OCI-LY7 (cell line): ENCODE measurements at regions of chr4 and their contacts with region 1.

Region 1: GRCh38 chr4:185811509-185812364 is at the start of gene SORBS2:
- DNase-seq: peak; percentile 92
- H3K4me3 ChIP-seq: peak within 1 kb of the TSS; percentile 78
- H3K27ac ChIP-seq: peak within 1 kb of the TSS; percentile 90
- H3K4me1 ChIP-seq: peaks cover 47% of the 10 kb centered on the region
- CTCF ChIP-seq: no peak
- total RNA-seq, gene SORBS2: 33.2 and 34.7 TPM in 2 replicates

Region 2: GRCh38 chr4:185634066-185634652 is 177.6 kb before region 1 on chr4:
- CTCF ChIA-PET with region 1: interaction called, 10 read pairs
- POLR2A ChIA-PET with region 1: no interaction called
- intact Hi-C with region 1: no loop called
- DNase-seq: peak; percentile 31
- H3K4me3 ChIP-seq: no peak overlapping the region
- H3K27ac ChIP-seq: no peak overlapping the region
- H3K4me1 ChIP-seq: no peaks in the 10 kb centered on the region
- CTCF ChIP-seq: peak; percentile 87

Region 3: GRCh38 chr4:185730387-185730786 is 81.3 kb before region 1 on chr4:
- CTCF ChIA-PET with region 1: no interaction called
- POLR2A ChIA-PET with region 1: interaction called, 10 read pairs
- intact Hi-C with region 1: loop called (anchors 1 kb)
- DNase-seq: peak; percentile 78
- H3K4me3 ChIP-seq: peak overlapping the region; percentile 46
- H3K27ac ChIP-seq: peak overlapping the region; percentile 47
- H3K4me1 ChIP-seq: peaks cover 51% of the 10 kb centered on the region
- CTCF ChIP-seq: no peak

Region 4: DNA sequence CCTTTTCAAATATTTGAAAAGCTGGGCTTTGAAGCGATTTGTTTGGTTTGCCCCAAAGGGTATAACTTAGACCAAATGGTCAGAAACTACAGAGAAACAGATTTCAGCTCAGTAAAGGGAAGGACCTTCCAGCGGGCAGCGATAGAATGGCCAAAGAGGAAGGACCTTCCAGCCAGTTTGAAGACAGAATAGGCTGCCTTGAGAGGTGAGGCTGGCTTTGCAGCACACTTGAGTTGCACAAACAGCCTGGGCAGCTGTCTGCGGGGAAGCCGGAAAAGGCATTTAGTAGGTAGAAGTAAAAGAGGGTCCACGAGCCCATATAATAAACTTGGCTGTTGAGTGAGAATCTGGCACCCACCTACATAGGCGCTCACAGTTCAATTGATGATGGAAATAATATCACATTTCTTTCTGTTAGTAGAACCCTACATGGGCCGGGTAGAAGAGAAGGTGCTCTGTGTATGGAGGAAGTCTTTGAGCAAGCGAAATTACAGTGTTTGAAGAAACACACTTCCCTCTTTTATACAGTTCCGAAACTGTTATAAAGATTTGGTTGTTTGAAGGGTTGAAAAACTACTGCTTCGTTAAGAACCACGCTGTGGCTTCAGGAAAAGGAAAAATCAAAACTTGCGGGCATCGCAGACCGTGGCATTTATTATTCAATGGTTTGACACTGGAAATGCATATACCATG is 75.2 kb after region 1 on chr4:
- CTCF ChIA-PET with region 1: no interaction called
- POLR2A ChIA-PET with region 1: interaction called, 3 read pairs
- intact Hi-C with region 1: loop called (anchors 2 kb)
- DNase-seq: peak; percentile 63
- H3K4me3 ChIP-seq: peak overlapping the region; percentile 7
- H3K27ac ChIP-seq: no peak overlapping the region
- H3K4me1 ChIP-seq: peaks cover 12% of the 10 kb centered on the region
- CTCF ChIP-seq: no peak